H1 (cell line): ENCODE measurements at regions of chr3 and their contacts with region 1.

Region 1: GRCh38 chr3:128879125-128879969 is at the start of gene ACAD9:
- DNase-seq: peak; percentile 98 to 100
- H3K4me3 ChIP-seq: peak within 1 kb of the TSS; percentile 78 to 90 (median 83)
- H3K27ac ChIP-seq: peak within 1 kb of the TSS; percentile 89
- H3K4me1 ChIP-seq: peaks cover 0 to 6% (median 3%) of the 10 kb centered on the region in 4 experiments; a peak in 4 of 7 replicates
- H3K27me3 ChIP-seq: no peaks in the 10 kb centered on the region
- CTCF ChIP-seq: no peak
- EP300 ChIP-seq: peak in 1 of 2 experiments; percentile 53; a peak in 1 of 3 replicates
- POLR2A ChIP-seq: peak; percentile 91 to 97
- RAD21 ChIP-seq: no peak
- total RNA-seq, gene ACAD9: 28.9 and 32.8 TPM in 2 replicates

Region 2: GRCh38 chr3:128845778-128846485 is 33.4 kb before region 1 on chr3:
- CTCF ChIA-PET with region 1: interaction called, 21 read pairs
- POLR2A ChIA-PET with region 1: interaction called, 4 read pairs
- DNase-seq: peak; percentile 60 to 97
- H3K4me3 ChIP-seq: peak overlapping the region in 3 of 4 experiments; percentile 22 to 49 (median 36); a peak in 5 of 8 replicates
- H3K27ac ChIP-seq: no peak overlapping the region
- H3K4me1 ChIP-seq: peaks cover 0 to 11% (median 9%) of the 10 kb centered on the region in 4 experiments; a peak in 4 of 7 replicates
- H3K27me3 ChIP-seq: no peaks in the 10 kb centered on the region
- CTCF ChIP-seq: peak in 2 of 3 experiments; percentile 85 to 88; a peak in 3 of 4 replicates
- EP300 ChIP-seq: 0 out of 3 replicates have a peak, but pooled peaks of 1 of the 2 experiments have one; percentile 34
- POLR2A ChIP-seq: no peak
- RAD21 ChIP-seq: peak; percentile 49 to 59

Region 3: GRCh38 chr3:128863560-128863959 is 15.8 kb before region 1 on chr3:
- CTCF ChIA-PET with region 1: interaction called, 42 read pairs
- POLR2A ChIA-PET with region 1: interaction called, 10 read pairs
- DNase-seq: peak in 1 of 2 experiments; percentile 54
- H3K4me3 ChIP-seq: no peak overlapping the region
- H3K27ac ChIP-seq: no peak overlapping the region
- H3K4me1 ChIP-seq: peaks cover 0 to 6% (median 0%) of the 10 kb centered on the region in 4 experiments; a peak in 1 of 7 replicates
- H3K27me3 ChIP-seq: no peaks in the 10 kb centered on the region
- CTCF ChIP-seq: peak; percentile 41 to 66 (median 64)
- EP300 ChIP-seq: no peak
- POLR2A ChIP-seq: no peak
- RAD21 ChIP-seq: peak; percentile 33 to 44

Region 4: GRCh38 chr3:128895843-128896697 is 16.7 kb after region 1 on chr3:
- CTCF ChIA-PET with region 1: interaction called, 4 read pairs
- POLR2A ChIA-PET with region 1: interaction called, 23 read pairs
- DNase-seq: no peak
- H3K4me3 ChIP-seq: no peak overlapping the region
- H3K27ac ChIP-seq: no peak overlapping the region
- H3K4me1 ChIP-seq: no peaks in the 10 kb centered on the region
- H3K27me3 ChIP-seq: no peaks in the 10 kb centered on the region
- CTCF ChIP-seq: no peak
- EP300 ChIP-seq: no peak
- POLR2A ChIP-seq: no peak
- RAD21 ChIP-seq: no peak

Region 5: DNA sequence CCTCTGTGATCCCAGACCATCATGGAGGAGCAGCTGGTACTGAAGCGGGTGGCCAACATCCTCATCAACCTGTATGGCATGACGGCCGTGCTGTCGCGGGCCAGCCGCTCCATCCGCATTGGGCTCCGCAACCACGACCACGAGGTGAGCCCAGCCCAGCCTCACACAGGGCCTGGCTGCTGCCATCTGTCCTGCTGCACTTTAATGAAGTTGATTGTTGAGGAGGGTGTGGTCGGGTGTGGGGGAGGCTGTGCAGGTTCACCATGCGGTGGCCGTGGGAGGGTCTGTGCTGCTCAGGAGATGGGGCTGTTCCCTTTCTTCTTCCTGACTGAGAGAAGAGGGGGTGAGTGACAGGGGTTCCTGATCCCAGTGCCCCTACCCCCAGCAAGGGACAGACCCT is 30.7 kb after region 1 on chr3:
- CTCF ChIA-PET with region 1: interaction called, 4 read pairs
- POLR2A ChIA-PET with region 1: interaction called, 11 read pairs
- DNase-seq: no peak
- H3K4me3 ChIP-seq: no peak overlapping the region
- H3K27ac ChIP-seq: no peak overlapping the region
- H3K4me1 ChIP-seq: no peaks in the 10 kb centered on the region
- H3K27me3 ChIP-seq: no peaks in the 10 kb centered on the region
- CTCF ChIP-seq: no peak
- EP300 ChIP-seq: no peak
- POLR2A ChIP-seq: no peak
- RAD21 ChIP-seq: no peak

Region 6: GRCh38 chr3:129106331-129106730 is 227.0 kb after region 1 on chr3:
- CTCF ChIA-PET with region 1: no interaction called
- POLR2A ChIA-PET with region 1: no interaction called
- DNase-seq: no peak
- H3K4me3 ChIP-seq: no peak overlapping the region
- H3K27ac ChIP-seq: no peak overlapping the region
- H3K4me1 ChIP-seq: no peaks in the 10 kb centered on the region
- H3K27me3 ChIP-seq: no peaks in the 10 kb centered on the region
- CTCF ChIP-seq: peak in 1 of 3 experiments; percentile 30; a peak in 1 of 4 replicates
- EP300 ChIP-seq: no peak
- POLR2A ChIP-seq: no peak
- RAD21 ChIP-seq: peak; percentile 25 to 44; a peak in 3 of 4 replicates